ENCODE measurements at regions of chr16 and their contacts with region 1.

Region 1: GRCh38 chr16:19167710-19168370 is at the start of gene SYT17:
- DNase-seq: peak; percentile 84
- ATAC-seq: peak; percentile 92
- total RNA-seq, gene SYT17: 8.2 TPM

Region 2: GRCh38 chr16:19375561-19376158 is 207.8 kb after region 1 on chr16:
- intact Hi-C with region 1: loop called (anchors 10 kb)
- DNase-seq: peak; percentile 63
- ATAC-seq: peak; percentile 78